ENCODE measurements at regions of chr6 and their contacts with region 1.

Region 1: DNA sequence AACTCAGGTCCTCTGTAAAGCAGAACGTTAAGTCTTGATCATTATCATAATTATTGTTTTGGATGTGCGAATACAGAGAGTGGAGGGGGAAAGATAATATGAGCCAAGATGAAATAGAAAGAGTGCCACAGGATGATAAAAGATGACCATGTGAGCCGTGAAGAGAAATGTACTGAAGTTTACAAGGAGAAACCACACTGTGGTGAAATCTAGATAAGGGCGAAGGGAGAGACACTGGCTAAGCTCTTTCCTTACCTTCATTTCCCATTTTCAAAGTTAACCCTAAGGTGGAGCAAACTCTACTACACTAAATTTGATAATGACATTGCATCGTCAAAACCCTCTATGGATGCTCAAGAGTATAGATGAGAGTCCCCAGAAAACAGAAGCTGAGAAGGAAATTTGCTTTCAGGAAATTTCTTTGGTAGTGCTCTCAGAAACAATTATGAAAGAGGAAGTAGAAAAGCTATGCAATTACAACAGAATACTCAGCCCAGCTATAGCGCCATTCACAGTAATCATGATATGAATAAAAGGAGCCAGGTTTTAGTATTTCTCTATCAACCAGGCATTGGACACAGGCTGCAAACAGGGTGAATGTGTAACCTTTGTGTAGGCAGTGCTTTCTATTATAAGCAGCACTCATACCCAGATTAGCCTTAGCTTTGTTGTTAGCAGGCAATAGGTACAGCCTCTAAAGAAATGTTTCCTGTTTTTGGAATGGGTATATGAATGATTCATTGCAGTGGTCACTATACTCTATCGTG is 1080.7 kb downstream of the GRIK2 start:
- DNase-seq: no peak
- ATAC-seq: no peak

Region 2: DNA sequence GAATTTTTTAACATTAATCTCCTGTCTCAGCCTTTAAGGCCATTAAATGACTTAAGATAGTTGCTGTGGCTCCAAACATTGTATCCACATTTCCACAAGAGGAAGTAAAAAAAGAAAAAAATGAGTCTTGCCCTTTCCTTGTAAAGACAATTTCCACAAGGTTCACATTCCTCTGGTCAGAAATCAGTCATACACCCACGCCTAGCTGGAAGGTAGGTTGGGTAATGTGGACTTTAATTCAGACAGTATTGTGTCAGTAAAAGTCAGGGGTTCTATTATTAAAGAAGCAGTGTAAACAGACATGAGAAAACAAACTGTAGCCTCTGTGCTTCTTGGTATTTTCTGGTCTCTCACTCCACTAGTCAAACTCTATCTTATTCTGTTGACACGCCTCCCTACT is 398.7 kb before region 1 on chr6:
- intact Hi-C with region 1: loop called (anchors 5 kb)
- DNase-seq: no peak
- ATAC-seq: no peak

Region 3: DNA sequence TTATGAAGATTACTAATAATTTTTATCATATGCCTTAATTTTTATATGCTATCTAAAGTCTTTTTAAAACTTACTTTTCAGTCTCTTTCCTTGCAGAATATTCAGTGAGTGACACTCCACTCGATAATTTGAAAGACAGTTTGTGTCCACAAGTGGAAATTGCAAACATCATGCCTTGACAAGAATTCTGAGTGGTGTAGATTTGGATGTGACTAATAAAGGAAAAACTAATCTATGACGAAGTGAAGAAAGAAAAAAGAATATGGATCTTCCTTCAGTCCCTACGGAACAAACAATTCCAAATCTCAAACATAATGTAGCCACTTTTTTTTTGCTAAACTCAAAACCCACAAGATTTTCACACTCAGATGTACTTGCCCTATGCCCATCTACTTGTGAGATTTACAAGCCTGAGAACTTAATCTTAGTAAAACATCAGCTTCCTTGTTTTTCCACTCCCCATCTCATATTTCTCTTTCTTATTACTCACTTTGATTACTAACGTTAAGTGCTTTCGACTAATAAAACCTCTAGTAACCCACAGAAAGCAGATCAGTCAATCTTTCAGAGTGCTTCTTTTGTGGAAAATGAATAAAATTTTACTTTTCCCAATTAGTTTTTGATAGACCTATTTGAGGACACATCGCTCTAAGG is 75.1 kb after region 1 on chr6:
- intact Hi-C with region 1: no loop called
- DNase-seq: no peak
- ATAC-seq: no peak